ENCODE measurements at regions of chr1 and their contacts with region 1.

Region 1: DNA sequence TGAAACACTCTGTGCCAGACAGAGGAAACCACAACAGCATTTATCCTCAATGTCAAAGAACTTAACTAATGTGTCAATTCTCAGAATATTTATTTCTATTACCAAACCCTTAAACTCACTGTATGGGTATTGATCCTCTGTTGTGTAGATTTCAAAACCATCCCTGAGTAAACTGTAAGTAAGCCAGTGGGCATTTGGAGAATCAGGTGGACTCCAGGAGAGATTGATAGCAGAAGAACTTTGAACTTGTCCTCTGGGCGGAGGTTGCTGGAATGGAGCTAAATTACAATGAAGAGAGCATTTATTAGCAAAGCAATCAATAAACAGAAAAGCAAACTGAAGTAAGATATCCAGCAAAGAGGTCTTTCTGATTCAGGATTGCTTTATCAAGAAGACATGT is 216.1 kb downstream of the USH2A start:
- DNase-seq: no peak

Region 2: GRCh38 chr1:215932558-215932957 is 274.6 kb before region 1 on chr1:
- CTCF ChIA-PET with region 1: no interaction called
- POLR2A ChIA-PET with region 1: no interaction called
- DNase-seq: no peak

Region 3: DNA sequence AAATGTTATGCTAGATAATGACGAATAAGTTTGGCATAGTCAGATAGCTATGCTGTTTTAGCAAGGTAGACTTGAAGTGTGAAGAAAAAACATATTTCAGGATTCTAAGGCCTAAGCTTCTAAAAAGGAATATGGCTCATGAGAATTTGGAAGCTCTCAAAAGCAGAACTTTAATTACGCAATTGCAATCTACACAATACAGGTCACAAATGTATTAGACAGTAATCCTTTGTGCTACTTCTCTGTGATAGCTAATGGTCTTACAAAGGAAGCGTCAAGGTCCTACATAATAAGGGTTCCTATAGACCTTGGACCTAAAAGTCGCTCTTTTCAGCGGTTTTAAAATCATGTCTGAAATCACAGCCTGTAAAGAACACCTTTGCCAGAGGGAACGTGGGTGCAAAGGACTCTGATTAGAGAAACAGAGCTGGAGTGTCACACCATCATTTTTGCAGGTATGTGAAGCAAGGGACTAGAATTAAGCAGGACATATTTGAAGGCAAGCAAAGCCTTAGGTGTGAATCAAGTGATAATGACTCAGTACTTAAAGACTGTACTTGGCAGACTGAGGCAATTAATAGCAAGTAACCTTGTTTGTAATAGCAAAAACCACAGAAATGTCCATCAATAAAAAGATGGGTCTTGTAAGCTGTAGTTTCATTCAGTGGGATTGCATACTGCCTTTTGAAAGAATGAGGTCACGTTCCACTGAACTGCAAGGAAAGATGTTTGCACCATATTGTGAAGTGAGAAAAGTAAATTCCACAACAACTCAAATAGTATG is 219.9 kb before region 1 on chr1:
- CTCF ChIA-PET with region 1: no interaction called
- POLR2A ChIA-PET with region 1: no interaction called
- DNase-seq: no peak

Region 4: GRCh38 chr1:216221260-216221700 is 14.1 kb after region 1 on chr1:
- CTCF ChIA-PET with region 1: interaction called, 16 read pairs
- POLR2A ChIA-PET with region 1: no interaction called
- DNase-seq: peak; percentile 67

Measured in HEK293T (cell line).